ENCODE measurements at regions of chr4 and their contacts with region 1.

Region 1: GRCh38 chr4:68074388-68074787 is 55.3 kb downstream of the TMPRSS11F start:
- DNase-seq: no peak

Region 2: GRCh38 chr4:67996127-67996526 is 78.3 kb before region 1 on chr4:
- intact Hi-C with region 1: loop called (anchors 10 kb)
- DNase-seq: no peak

Region 3: GRCh38 chr4:68129793-68130192 is 55.4 kb after region 1 on chr4 and contains the start of gene TMPRSS11F:
- intact Hi-C with region 1: no loop called
- DNase-seq: no peak